AG04450 (cell line): ENCODE measurements at regions of chr18 and their contacts with region 1.

Region 1: DNA sequence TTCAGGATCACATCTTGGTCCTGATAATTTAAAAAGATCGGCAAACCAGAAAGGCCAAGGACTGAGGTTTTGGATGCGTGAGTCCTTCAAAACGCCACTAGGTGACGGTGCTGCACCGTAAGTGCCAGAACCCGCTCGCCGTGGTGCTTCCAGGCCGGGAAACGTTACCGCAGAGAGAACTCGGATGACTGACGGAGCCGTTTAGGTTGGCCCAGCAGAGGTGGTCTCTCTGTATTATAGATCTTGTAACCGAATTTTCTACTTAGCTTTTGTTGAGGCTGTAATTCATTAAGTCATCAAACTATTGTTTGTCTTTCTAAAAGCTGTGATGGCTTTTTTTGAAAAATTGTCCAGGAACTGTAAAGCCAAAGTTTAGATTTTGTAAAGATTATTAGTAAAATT is 39.8 kb upstream of the ADCYAP1 start:
- DNase-seq: peak; percentile 39
- H3K4me3 ChIP-seq: no peak overlapping the region
- H3K27ac ChIP-seq: no peak overlapping the region
- H3K27me3 ChIP-seq: peaks cover 7% of the 10 kb centered on the region
- CTCF ChIP-seq: peak; percentile 100

Region 2: DNA sequence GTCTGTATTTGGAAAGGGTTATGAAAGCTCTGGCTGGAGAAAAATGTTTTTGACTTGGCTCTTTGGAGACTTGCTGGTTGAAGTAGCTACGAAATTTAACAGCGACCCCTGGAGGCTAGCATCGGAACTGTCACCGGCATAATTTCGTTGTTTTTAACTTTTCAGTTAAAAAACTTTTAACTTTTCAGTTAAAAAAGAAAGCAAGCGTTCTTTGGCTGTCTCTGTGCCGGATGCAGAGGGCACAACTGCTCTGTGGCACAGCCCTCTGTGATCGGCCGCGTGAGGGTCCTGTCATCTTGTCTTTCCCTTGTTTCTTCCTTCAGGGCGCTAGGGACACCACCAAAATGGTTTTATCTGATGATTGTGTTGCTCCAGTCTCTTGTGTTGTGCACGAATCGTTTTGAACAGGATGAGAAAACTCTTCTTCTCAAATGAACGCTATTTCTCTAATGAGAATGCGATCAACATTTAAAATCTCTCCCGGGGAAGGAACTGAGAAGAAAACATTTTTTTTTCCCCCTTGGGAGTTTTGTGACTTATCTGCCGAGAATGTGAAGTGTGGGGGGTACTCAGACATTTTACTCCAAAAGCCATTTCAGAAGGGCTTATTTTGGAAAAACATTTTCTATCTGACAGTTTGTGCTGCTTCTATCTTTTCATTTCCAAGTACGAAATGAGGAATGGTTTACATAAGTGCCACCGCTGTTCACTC is 96.9 kb after region 1 on chr18:
- CTCF ChIA-PET with region 1: interaction called, 25 read pairs
- POLR2A ChIA-PET with region 1: no interaction called
- DNase-seq: peak; percentile 7
- H3K4me3 ChIP-seq: peak overlapping the region; percentile 55
- H3K27ac ChIP-seq: no peak overlapping the region
- H3K27me3 ChIP-seq: no peaks in the 10 kb centered on the region
- CTCF ChIP-seq: peak; percentile 92

Region 3: GRCh38 chr18:1435487-1435886 is 570.6 kb after region 1 on chr18:
- CTCF ChIA-PET with region 1: no interaction called
- POLR2A ChIA-PET with region 1: no interaction called
- DNase-seq: no peak
- H3K4me3 ChIP-seq: no peak overlapping the region
- H3K27ac ChIP-seq: no peak overlapping the region
- H3K27me3 ChIP-seq: no peaks in the 10 kb centered on the region
- CTCF ChIP-seq: no peak